MCF 10A (cell line): ENCODE measurements at regions of chr18 and their contacts with region 1.

Region 1: GRCh38 chr18:23994361-23994902 is 20.1 kb upstream of the TTC39C start:
- DNase-seq: peak; percentile 98
- H3K4me3 Mint-ChIP-seq: peak overlapping the region; percentile 46
- H3K27ac Mint-ChIP-seq: no peak overlapping the region
- H3K4me1 Mint-ChIP-seq: peaks cover 44% of the 10 kb centered on the region
- H3K27me3 Mint-ChIP-seq: no peaks in the 10 kb centered on the region
- CTCF ChIP-seq: no peak

Region 2: DNA sequence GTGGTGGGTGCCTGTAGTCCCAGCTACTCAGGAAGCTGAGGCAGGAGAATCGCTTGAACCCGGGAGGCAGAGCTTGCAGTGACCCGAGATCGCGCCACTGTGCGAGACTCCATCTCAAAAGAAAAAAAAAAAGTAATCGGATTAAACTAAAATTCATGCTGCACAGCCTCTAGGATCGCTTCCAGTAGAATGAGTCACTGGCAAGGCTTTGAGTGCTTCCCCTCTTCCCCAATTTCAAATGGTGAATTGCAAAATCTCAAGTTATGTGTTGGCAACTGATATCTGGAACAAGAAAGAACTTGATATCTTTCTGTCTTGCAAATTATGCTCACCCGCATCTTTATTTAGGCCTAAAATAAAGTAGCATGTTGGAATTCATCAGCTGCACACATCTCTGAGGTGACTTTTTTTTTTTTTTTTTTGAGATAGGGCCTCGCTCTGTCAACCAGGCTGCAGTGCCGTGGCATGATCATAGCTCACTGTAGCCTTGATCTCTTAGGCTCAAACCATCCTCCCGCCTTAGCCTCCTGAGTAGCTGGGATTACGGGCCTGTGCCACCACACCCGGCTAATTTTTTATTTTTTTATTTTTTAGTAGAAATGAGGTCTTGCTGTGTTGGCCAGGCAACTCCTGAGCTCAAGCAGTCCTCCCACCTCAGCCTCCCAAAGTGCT is 32.9 kb after region 1 on chr18:
- CTCF ChIA-PET with region 1: interaction called, 4 read pairs
- POLR2A ChIA-PET with region 1: interaction called, 24 read pairs
- intact Hi-C with region 1: no loop called
- DNase-seq: peak; percentile 95
- H3K4me3 Mint-ChIP-seq: peak overlapping the region; percentile 57
- H3K27ac Mint-ChIP-seq: peak overlapping the region; percentile 74
- H3K4me1 Mint-ChIP-seq: peaks cover 31% of the 10 kb centered on the region
- H3K27me3 Mint-ChIP-seq: no peaks in the 10 kb centered on the region
- CTCF ChIP-seq: no peak

Region 3: DNA sequence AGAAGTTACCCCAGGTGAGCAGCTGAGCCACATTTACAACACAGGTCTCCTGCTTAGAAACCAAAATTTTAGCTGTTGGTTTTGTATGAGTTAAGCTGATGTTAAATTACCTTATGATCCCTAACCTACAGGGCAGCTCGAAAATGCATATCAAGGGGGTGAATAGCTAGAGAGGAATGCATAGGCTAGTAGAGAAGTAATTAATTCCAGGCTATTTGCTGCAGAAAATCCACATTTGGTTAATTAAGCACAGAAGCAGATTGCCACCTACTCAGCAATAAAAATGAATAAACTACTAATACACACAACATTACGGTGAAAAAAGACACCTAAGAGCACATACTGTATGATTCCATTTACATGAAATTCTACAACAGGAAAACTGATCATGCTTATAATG is 311.8 kb after region 1 on chr18:
- CTCF ChIA-PET with region 1: no interaction called
- POLR2A ChIA-PET with region 1: no interaction called
- intact Hi-C with region 1: no loop called
- DNase-seq: no peak
- H3K4me3 Mint-ChIP-seq: no peak overlapping the region
- H3K27ac Mint-ChIP-seq: no peak overlapping the region
- H3K4me1 Mint-ChIP-seq: no peaks in the 10 kb centered on the region
- H3K27me3 Mint-ChIP-seq: no peaks in the 10 kb centered on the region
- CTCF ChIP-seq: no peak